H1 (cell line): ENCODE measurements at regions of chr1 and their contacts with region 1.

Region 1: DNA sequence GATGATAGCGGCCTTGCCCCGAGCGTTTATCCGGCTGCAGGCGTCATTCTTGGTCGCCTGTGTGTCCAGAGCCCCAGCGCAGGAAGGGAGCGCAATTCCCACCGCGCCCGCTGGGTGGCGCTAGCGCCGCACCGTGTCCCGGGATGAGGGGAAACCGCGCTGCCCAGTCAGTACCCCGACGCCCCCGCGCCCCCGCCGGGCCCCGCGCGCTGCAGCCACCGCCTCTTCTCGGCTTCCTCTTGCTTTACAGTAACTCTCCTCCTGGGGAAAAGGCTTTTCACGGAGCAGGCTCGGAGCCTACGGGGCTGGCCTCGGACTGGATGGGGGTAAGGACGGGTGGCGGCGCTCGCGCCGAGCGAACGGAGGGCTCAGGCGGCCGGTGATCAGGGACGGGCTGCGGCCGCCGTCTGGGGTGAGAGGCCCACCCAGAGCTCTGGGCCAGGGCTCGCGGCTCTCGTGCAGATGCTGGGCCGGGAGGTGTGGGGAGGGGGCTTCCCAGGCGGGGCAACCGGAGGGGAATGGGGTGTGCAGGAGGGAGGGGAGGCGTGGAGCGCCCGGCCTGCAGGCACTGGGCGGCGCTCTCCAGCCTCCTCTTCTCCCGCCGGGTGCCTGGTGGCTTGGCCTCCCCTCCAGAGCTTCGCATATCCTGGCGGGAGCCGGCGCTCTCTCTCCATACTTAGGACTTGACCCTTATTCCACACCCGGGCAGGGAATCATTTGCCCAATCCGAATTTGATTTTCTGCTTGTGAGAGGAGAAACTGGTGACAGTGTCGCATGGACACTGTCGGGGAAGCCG is 29.8 kb downstream of the TEX35 start:
- DNase-seq: peak; percentile 71 to 100
- H3K4me3 ChIP-seq: peak overlapping the region; percentile 51 to 94 (median 90)
- H3K27ac ChIP-seq: peak overlapping the region; percentile 73; the same call in 1 of the 2 replicates
- H3K4me1 ChIP-seq: peaks cover 0 to 8% (median 3%) of the 10 kb centered on the region in 4 experiments; a peak in 2 of 7 replicates
- H3K27me3 ChIP-seq: no peaks in the 10 kb centered on the region
- CTCF ChIP-seq: peak; percentile 77 to 94 (median 92)
- EP300 ChIP-seq: no peak; a peak in 1 of 3 replicates
- POLR2A ChIP-seq: no peak; a peak in 1 of 3 replicates
- RAD21 ChIP-seq: peak; percentile 82 to 88

Region 2: GRCh38 chr1:178477841-178478240 is 64.9 kb before region 1 on chr1:
- CTCF ChIA-PET with region 1: no interaction called
- POLR2A ChIA-PET with region 1: no interaction called
- DNase-seq: no peak
- H3K4me3 ChIP-seq: no peak overlapping the region
- H3K27ac ChIP-seq: no peak overlapping the region
- H3K4me1 ChIP-seq: peaks cover 0 to 3% (median 0%) of the 10 kb centered on the region in 4 experiments; a peak in 1 of 7 replicates
- H3K27me3 ChIP-seq: no peaks in the 10 kb centered on the region
- CTCF ChIP-seq: no peak
- EP300 ChIP-seq: no peak
- POLR2A ChIP-seq: no peak
- RAD21 ChIP-seq: no peak

Region 3: GRCh38 chr1:178532392-178532791 is 10.4 kb before region 1 on chr1:
- CTCF ChIA-PET with region 1: interaction called, 87 read pairs
- POLR2A ChIA-PET with region 1: no interaction called
- DNase-seq: peak; percentile 54 to 94
- H3K4me3 ChIP-seq: no peak overlapping the region; a peak in 1 of 8 replicates
- H3K27ac ChIP-seq: no peak overlapping the region
- H3K4me1 ChIP-seq: peaks cover 0 to 2% (median under 1%) of the 10 kb centered on the region in 4 experiments; a peak in 1 of 7 replicates
- H3K27me3 ChIP-seq: no peaks in the 10 kb centered on the region; a peak in 1 of 7 replicates
- CTCF ChIP-seq: peak; percentile 89 to 96 (median 94)
- EP300 ChIP-seq: no peak
- POLR2A ChIP-seq: no peak
- RAD21 ChIP-seq: peak; percentile 96 to 97

Region 4: DNA sequence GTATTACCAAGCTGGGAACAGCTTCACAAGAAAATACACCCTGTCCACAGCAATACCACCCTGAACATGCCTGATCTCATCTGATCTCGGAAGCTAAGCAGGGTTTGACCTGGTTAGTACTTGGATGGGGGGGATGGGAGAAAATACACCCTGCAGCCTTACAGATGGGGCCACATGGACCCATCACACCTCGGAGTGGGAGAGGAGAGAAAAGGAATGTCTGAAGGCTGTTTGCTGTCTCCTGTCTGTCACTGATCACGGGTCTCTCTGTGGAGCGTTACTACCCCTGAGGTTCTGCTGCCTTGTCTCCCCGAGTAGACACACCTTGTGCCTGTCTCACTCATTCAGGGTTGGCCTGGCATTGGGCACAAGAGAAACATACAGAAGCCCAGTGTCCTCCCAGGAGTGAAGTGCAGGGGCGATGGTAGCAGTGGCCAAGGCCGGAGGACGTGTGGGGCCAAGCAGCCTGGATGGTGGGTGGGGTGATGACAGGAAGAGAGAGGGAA is 18.2 kb after region 1 on chr1:
- CTCF ChIA-PET with region 1: interaction called, 12 read pairs
- POLR2A ChIA-PET with region 1: no interaction called
- DNase-seq: no peak
- H3K4me3 ChIP-seq: no peak overlapping the region
- H3K27ac ChIP-seq: no peak overlapping the region; the same call in 1 of the 2 replicates
- H3K4me1 ChIP-seq: no peaks in the 10 kb centered on the region
- H3K27me3 ChIP-seq: no peaks in the 10 kb centered on the region
- CTCF ChIP-seq: no peak
- EP300 ChIP-seq: no peak
- POLR2A ChIP-seq: no peak
- RAD21 ChIP-seq: no peak

Region 5: DNA sequence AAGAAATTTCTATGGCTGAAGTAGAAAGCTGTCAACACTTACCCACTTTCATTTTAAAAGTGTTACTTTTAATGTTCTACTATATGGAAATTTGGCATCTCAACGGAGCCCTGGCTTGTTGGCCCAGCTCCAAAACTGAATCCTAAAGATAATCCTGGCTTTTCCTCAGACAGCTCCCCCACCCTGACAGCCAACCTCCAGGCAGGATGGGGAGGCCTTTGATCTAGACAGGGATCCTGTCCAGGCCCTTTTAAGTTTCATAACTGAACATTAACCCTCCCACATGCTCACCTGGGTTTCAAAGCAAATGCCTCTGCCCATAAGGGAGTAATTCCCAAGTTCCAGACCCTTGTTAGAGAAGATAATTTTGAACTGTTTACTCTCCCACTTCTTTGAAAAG is 82.9 kb after region 1 on chr1:
- CTCF ChIA-PET with region 1: interaction called, 14 read pairs
- POLR2A ChIA-PET with region 1: no interaction called
- DNase-seq: no peak
- H3K4me3 ChIP-seq: no peak overlapping the region
- H3K27ac ChIP-seq: no peak overlapping the region
- H3K4me1 ChIP-seq: no peaks in the 10 kb centered on the region
- H3K27me3 ChIP-seq: no peaks in the 10 kb centered on the region
- CTCF ChIP-seq: no peak
- EP300 ChIP-seq: no peak
- POLR2A ChIP-seq: no peak
- RAD21 ChIP-seq: no peak

Region 6: GRCh38 chr1:178706432-178706831 is 163.7 kb after region 1 on chr1:
- CTCF ChIA-PET with region 1: interaction called, 11 read pairs
- POLR2A ChIA-PET with region 1: no interaction called
- DNase-seq: no peak
- H3K4me3 ChIP-seq: no peak overlapping the region
- H3K27ac ChIP-seq: no peak overlapping the region
- H3K4me1 ChIP-seq: peaks cover 0 to 3% (median 0%) of the 10 kb centered on the region in 4 experiments; a peak in 1 of 7 replicates
- H3K27me3 ChIP-seq: no peaks in the 10 kb centered on the region
- CTCF ChIP-seq: no peak
- EP300 ChIP-seq: no peak
- POLR2A ChIP-seq: no peak
- RAD21 ChIP-seq: no peak

Region 7: DNA sequence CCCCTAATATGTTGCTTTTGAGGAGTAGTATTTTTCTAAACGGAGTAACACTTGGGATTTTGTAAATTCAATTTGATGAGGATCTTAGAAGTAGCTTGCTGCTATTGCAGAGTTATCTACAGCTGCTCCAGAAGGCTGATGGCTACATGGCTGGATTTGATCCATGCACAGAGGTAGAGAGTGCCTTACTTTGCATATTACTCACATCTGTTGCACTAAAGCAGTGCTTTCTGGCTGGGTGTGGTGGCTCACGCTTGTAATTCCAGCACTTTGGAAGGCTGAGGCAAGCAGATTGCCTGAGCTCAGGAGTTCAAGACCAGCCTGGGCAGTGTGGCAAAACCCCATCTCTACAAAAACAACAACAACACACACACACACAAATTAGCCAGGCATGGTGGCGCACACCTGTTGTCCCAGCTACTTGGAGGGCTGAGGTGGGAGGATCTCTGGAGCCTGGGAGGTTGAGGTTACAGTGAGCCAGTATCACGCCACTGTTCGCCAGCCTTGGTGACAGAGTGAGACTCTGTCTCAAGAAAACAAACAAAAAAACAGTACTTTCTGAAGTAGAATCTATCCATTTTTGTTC is 206.9 kb after region 1 on chr1:
- CTCF ChIA-PET with region 1: interaction called, 55 read pairs
- POLR2A ChIA-PET with region 1: no interaction called
- DNase-seq: no peak
- H3K4me3 ChIP-seq: no peak overlapping the region
- H3K27ac ChIP-seq: no peak overlapping the region
- H3K4me1 ChIP-seq: no peaks in the 10 kb centered on the region; a peak in 1 of 7 replicates
- H3K27me3 ChIP-seq: no peaks in the 10 kb centered on the region
- CTCF ChIP-seq: no peak
- EP300 ChIP-seq: no peak
- POLR2A ChIP-seq: no peak
- RAD21 ChIP-seq: no peak